Activated naive CD4-positive, alpha-beta T cell treated with anti-CD3 and anti-CD28 coated beads for 36 hours (primary cell): ENCODE measurements at regions of chr13 and their contacts with region 1.

Region 1: DNA sequence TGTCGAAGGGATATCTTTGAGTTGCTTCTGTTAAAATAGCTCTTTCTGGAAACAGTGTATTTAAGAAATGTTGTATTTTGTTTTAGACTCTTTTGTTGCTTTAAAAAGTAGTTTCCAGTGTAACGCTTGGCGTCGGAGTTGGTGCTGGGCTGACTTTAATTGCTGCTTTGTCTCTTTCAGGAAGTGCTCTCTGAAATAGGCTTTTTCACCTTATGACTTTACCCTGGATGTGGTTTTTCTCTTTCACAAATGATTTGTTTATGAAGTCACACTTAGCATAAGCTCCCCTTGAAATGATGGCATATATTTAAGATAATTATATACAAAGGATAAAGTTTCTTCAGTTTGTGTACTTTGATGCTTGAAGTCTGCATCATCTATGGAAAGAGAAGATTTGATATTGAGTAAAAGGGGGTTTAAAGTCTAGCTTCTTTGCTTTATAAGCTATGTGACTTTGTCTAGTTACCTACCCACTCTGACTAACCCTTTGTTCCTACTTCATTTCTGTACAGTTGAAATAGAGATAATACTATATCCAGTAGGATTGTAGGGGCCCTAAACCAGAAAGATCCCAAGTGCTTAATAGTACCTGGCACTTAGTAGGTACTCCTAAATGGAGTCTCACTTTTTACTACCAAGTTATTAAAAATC is at the start of gene GPR18:
- DNase-seq: peak; percentile 61
- H3K4me3 Mint-ChIP-seq: peak within 1 kb of the TSS; percentile 81
- H3K27ac Mint-ChIP-seq: peak within 1 kb of the TSS; percentile 91
- H3K4me1 Mint-ChIP-seq: peaks cover 72% of the 10 kb centered on the region
- H3K27me3 Mint-ChIP-seq: no peaks in the 10 kb centered on the region
- total RNA-seq, gene GPR18: 2.4 TPM

Region 2: GRCh38 chr13:98875146-98875729 is 383.1 kb before region 1 on chr13:
- CTCF ChIA-PET with region 1: no interaction called
- intact Hi-C with region 1: no loop called
- DNase-seq: no peak
- H3K4me3 Mint-ChIP-seq: no peak overlapping the region
- H3K27ac Mint-ChIP-seq: peak overlapping the region; percentile 10
- H3K4me1 Mint-ChIP-seq: peaks cover 23% of the 10 kb centered on the region
- H3K27me3 Mint-ChIP-seq: no peaks in the 10 kb centered on the region

Region 3: DNA sequence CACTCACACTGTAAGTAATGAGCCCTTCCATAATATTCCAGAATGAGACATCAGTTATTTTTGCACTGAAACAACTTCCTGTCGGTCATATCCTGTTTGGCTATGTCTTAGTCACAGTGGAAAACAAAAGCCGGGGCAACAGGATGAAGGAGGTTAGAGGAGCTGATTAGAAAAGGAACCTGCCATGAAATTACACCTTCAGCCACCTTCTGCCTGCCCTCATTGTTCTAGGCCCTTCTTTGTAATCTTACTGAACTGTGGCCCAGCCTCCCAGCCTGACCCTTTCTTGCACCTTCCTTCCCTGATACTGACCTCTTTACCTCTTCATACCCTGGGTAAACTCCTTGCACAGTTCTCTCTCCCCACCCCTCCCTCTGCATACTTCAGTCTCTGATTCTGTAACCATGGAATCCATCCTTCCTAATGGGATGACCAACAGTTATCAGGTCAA is 347.8 kb before region 1 on chr13:
- CTCF ChIA-PET with region 1: no interaction called
- intact Hi-C with region 1: loop called (anchors 2 kb)
- DNase-seq: peak; percentile 72
- H3K4me3 Mint-ChIP-seq: peak overlapping the region; percentile 14
- H3K27ac Mint-ChIP-seq: peak overlapping the region; percentile 90
- H3K4me1 Mint-ChIP-seq: peaks cover 63% of the 10 kb centered on the region
- H3K27me3 Mint-ChIP-seq: no peaks in the 10 kb centered on the region

Region 4: DNA sequence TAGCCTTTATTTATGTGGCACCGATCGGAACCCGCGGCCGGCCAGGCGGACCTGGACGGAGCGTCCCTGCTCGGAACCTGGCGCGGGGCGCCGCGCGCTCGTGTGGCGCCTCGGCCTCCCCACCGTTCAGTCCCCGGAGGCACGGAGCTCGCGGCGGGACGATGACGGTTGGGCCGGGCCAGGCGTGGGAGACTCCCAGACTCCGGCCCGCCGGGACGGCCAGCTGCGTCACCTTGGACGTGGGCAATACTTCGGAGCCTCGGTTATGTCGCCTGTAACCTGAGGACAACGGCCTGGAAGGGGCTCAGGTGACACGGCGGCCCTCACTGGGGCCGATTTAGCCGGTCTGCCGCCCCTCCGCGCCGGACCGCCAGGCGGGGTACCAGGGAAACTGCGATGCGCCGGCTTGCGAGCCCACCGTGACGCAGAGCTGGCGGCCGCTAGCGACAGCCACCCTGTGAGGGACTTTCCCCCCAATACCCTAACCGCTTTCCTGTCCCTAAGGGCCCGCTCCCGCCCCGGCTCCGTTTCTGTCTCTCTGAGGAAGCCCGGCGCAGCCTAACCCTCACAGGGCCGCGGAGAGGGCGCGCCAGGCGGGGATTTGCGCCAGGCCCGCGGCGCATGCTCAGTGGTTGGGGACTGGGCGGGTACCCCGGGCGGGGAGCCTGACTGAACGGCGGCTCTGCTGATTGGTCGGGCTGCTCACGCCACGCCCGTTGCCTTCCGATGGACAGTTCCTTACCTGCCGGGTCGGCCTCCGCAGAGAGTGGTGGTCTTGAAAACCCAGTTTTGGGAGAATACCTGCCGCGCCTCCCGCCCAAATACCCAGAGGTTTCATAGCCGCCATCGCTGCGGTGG is 171.0 kb before region 1 on chr13:
- CTCF ChIA-PET with region 1: no interaction called
- intact Hi-C with region 1: loop called (anchors 2 kb)
- DNase-seq: peak; percentile 94
- H3K4me3 Mint-ChIP-seq: peak overlapping the region; percentile 99
- H3K27ac Mint-ChIP-seq: peak overlapping the region; percentile 97
- H3K4me1 Mint-ChIP-seq: peaks cover 30% of the 10 kb centered on the region
- H3K27me3 Mint-ChIP-seq: no peaks in the 10 kb centered on the region

Region 5: GRCh38 chr13:99214232-99214631 is 44.1 kb before region 1 on chr13:
- CTCF ChIA-PET with region 1: interaction called, 5 read pairs
- intact Hi-C with region 1: loop called (anchors 1 kb)
- DNase-seq: peak; percentile 83
- H3K4me3 Mint-ChIP-seq: peak overlapping the region; percentile 72
- H3K27ac Mint-ChIP-seq: peak overlapping the region; percentile 78
- H3K4me1 Mint-ChIP-seq: peaks cover 82% of the 10 kb centered on the region
- H3K27me3 Mint-ChIP-seq: no peaks in the 10 kb centered on the region

Region 6: GRCh38 chr13:99296398-99296797 is 38.1 kb after region 1 on chr13:
- CTCF ChIA-PET with region 1: no interaction called
- intact Hi-C with region 1: loop called (anchors 1 kb)
- DNase-seq: no peak
- H3K4me3 Mint-ChIP-seq: peak overlapping the region; percentile 48
- H3K27ac Mint-ChIP-seq: peak overlapping the region; percentile 87
- H3K4me1 Mint-ChIP-seq: peaks cover 75% of the 10 kb centered on the region
- H3K27me3 Mint-ChIP-seq: no peaks in the 10 kb centered on the region

Region 7: DNA sequence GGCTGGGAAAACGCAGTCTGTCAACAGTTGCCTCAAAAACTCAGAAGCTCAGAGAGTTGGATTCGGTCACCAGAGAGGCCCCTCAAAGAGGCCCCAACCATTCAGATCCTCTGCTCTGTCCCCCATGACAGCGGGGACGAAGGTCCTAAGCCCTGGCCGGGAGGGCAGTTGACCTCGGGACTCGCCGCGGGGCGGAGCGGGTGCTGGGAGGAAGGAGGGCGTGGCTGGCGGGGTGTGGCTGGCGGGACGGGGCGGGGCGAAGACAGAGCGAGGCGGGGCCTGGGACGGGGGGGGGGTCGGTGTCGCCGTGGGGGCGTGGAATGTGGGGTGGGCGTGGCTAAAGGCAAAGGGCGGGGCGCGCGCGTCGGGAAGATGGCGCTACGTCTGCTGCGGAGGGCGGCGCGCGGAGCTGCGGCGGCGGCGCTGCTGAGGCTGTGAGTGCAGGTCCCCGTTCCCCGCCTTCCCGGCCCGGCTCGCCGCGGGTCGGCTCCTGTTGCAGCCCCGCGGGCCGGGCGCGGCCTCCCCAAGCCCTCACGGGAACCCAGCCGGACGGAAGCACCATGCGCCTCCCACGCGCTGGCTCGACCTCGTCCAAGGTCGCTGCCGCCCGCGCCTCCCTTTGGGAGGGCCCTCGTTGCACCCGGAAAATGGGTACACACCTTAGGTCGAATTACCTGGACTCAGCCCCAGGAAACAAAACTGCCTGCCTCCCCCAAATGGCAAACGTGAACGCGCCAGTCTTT is 348.2 kb after region 1 on chr13:
- CTCF ChIA-PET with region 1: no interaction called
- intact Hi-C with region 1: loop called (anchors 5 kb)
- DNase-seq: peak; percentile 92
- H3K4me3 Mint-ChIP-seq: peak within 1 kb of the TSS; percentile 82
- H3K27ac Mint-ChIP-seq: peak within 1 kb of the TSS; percentile 75
- H3K4me1 Mint-ChIP-seq: peaks cover 23% of the 10 kb centered on the region
- H3K27me3 Mint-ChIP-seq: no peaks in the 10 kb centered on the region

Region 8: DNA sequence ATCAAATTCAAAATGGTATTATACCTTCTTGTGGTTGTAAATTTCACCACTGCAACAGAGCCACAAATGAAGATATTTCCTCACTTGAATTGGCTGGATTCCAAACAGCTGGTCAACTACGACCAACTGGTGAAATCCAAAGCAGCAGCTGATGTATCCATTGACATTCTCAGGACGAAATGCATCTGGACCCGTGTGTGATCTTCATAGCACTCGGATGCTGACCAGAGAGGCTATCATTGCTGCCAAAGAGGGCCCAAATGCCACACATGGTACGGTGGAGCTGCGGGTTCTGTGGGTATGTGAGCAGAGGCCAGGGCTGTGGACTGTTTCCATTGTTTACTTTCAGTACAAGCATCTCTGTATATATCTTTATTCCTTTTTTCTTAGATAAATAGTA is 805.0 kb after region 1 on chr13:
- CTCF ChIA-PET with region 1: no interaction called
- intact Hi-C with region 1: no loop called
- DNase-seq: no peak
- H3K4me3 Mint-ChIP-seq: no peak overlapping the region
- H3K27ac Mint-ChIP-seq: no peak overlapping the region
- H3K4me1 Mint-ChIP-seq: no peaks in the 10 kb centered on the region
- H3K27me3 Mint-ChIP-seq: peaks cover 5% of the 10 kb centered on the region